Tibial artery (tissue), 4 donors: ENCODE measurements at regions of chr9 and their contacts with region 1.

Region 1: DNA sequence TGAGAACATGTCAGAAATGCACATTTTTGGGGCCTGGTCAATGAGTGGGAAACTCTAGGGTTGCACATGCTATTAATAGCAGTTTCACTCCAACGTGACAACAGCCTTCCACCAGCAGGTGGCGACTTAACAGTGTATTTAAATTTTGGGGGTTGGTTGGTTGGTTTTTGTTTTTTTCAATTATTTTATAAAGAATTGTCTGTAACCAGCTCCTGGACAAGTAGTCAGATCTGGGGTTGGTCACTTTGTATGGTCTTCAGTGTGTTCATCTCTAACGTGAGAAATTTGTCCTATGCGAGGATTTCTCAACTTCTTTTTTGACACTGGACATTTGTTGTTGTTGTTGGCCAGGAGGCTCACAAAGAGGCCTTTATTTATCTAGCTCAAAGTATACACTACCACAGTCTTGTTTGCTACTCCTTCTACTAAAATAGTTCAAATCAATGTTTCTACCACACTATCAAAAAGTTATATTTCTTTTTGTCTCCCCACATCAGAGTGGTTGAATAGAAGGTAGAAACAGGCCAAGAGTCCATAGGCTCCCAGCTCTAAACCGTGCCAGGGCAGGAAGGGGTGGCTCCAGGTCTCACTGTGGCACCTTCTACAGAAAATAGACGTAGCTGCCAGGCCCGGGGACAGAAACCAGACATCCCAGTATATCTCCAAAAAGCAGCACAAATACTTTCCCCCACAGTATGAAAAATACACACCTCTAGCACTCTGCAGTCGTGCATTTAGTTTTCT is 110.4 kb downstream of the TRPM6 start:
- DNase-seq: peak in 1 of 2 donors; percentile 71
- H3K4me3 ChIP-seq: no peak overlapping the region
- H3K27ac ChIP-seq: no peak overlapping the region
- H3K4me1 ChIP-seq: no peaks in the 10 kb centered on the region
- H3K27me3 ChIP-seq: peaks cover 0 to 4% of the 10 kb centered on the region in 2 donors
- CTCF ChIP-seq: peak; percentile 64 to 66

Region 2: GRCh38 chr9:74073897-74074296 is 703.4 kb before region 1 on chr9:
- intact Hi-C with region 1: no loop called
- DNase-seq: no peak
- H3K4me3 ChIP-seq: no peak overlapping the region
- H3K27ac ChIP-seq: no peak overlapping the region
- H3K4me1 ChIP-seq: no peaks in the 10 kb centered on the region
- H3K27me3 ChIP-seq: no peaks in the 10 kb centered on the region
- CTCF ChIP-seq: no peak

Region 3: GRCh38 chr9:74333384-74334032 is 443.8 kb before region 1 on chr9:
- intact Hi-C with region 1: no loop called
- DNase-seq: no peak
- H3K4me3 ChIP-seq: no peak overlapping the region
- H3K27ac ChIP-seq: no peak overlapping the region
- H3K4me1 ChIP-seq: peaks cover 0 to 14% (median 0%) of the 10 kb centered on the region in 4 donors
- H3K27me3 ChIP-seq: no peaks in the 10 kb centered on the region
- CTCF ChIP-seq: no peak

Region 4: GRCh38 chr9:75001719-75002422 is 224.6 kb after region 1 on chr9:
- intact Hi-C with region 1: loop called (anchors 5 kb)
- DNase-seq: no peak
- H3K4me3 ChIP-seq: no peak overlapping the region
- H3K27ac ChIP-seq: no peak overlapping the region
- H3K4me1 ChIP-seq: no peaks in the 10 kb centered on the region
- H3K27me3 ChIP-seq: no peaks in the 10 kb centered on the region
- CTCF ChIP-seq: peak; percentile 72 to 83

Region 5: DNA sequence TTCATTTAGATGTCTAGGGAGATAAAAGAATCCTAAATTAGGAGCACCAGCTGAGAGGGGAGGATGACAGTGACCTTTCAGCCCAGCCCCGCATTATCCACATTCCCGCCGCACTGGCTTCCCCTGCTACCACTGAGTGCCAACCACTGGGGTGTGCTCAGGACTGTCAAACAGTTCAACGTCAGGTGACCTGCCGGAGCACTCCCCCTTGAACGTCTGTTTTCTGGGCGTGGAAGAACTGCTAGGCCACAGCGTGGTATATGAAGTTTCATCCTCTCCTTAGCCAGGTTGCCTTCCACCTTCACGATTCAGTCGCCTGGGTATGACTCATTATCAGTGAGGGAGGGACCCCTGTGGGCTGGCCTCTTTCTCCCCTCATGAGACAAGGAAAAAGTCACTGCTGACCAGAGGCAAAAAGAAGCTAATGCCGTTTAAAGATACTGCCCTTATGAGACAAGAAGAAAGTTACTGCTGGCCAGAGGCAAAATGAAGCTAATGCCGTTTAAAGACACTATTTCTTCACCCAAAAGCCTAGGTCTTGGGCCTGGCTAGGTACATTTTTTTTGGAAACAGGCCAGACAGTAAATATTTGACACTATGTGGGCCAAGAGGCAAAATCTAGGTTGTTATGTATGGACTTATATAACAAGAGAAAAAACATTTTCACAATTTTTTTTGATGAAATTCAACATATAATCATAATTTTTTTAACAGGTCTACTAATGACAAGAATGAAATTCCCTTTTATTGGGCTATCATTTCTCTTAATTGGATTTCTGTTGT is 306.1 kb after region 1 on chr9:
- intact Hi-C with region 1: loop called (anchors 5 kb)
- DNase-seq: no peak
- H3K4me3 ChIP-seq: no peak overlapping the region
- H3K27ac ChIP-seq: peak overlapping the region in 1 of 2 donors; percentile 49
- H3K4me1 ChIP-seq: peaks cover 0 to 31% (median 16%) of the 10 kb centered on the region in 4 donors
- H3K27me3 ChIP-seq: no peaks in the 10 kb centered on the region
- CTCF ChIP-seq: no peak